ENCODE measurements at regions of chr19 and their contacts with region 1.

Region 1: GRCh38 chr19:55599468-55600279 is at the start of gene FIZ1:
- DNase-seq: peak; percentile 99
- H3K4me3 Mint-ChIP-seq: peak within 1 kb of the TSS; percentile 88
- H3K27ac Mint-ChIP-seq: peak within 1 kb of the TSS; percentile 98
- H3K4me1 Mint-ChIP-seq: peaks cover 33% of the 10 kb centered on the region
- H3K27me3 Mint-ChIP-seq: no peaks in the 10 kb centered on the region
- total RNA-seq, gene FIZ1: 20.4 and 21.4 TPM in 2 replicates

Region 2: DNA sequence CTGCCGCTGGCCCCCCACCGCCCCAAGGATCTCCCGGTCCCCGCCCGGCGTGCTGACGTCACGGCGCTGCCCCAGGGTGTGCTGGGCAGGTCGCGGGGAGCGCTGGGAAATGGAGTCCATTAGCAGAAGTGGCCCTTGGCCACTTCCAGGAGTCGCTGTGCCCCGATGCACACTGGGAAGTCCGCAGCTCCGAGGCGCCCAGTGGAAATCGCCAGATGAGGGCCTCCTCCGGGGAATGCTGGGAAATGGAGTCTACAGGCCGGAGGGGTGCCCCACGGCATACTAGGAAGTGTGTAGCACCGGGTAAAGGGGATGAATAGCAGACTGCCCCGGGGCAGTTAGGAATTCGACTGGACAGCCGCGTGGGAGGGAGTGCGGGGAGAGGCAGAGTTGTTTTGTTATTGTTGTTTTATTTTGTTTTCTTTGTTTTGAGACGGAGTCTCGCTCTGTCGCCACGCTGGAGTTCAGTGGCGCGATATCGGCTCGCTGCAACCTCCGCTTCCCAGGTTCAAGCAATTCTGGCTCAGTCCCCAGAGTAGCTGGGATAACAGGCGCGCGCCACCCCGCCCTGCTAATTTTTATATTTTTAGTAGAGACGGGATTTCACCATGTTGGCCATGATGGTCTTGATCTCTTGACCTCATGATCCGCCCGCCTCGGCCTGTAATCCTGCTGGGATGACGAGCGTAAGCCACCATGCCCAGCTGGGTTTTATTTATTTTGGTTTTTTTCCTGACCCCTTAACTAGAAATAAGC is 481.9 kb before region 1 on chr19 and contains the start of gene PPP1R12C:
- intact Hi-C with region 1: loop called (anchors 1 kb)
- DNase-seq: peak; percentile 99
- H3K4me3 Mint-ChIP-seq: peak within 1 kb of the TSS; percentile 94
- H3K27ac Mint-ChIP-seq: peak within 1 kb of the TSS; percentile 91
- H3K4me1 Mint-ChIP-seq: peaks cover 28% of the 10 kb centered on the region
- H3K27me3 Mint-ChIP-seq: peaks cover 10% of the 10 kb centered on the region
- total RNA-seq, gene PPP1R12C: 103 and 104 TPM in 2 replicates

Region 3: GRCh38 chr19:55476100-55476775 is 123.4 kb before region 1 on chr19 and contains the start of gene ZNF628:
- intact Hi-C with region 1: loop called (anchors 1 kb)
- DNase-seq: peak; percentile 99
- H3K4me3 Mint-ChIP-seq: peak within 1 kb of the TSS; percentile 93
- H3K27ac Mint-ChIP-seq: peak within 1 kb of the TSS; percentile 96
- H3K4me1 Mint-ChIP-seq: peaks cover 23% of the 10 kb centered on the region
- H3K27me3 Mint-ChIP-seq: no peaks in the 10 kb centered on the region
- total RNA-seq, gene ZNF628: 8.8 and 10.0 TPM in 2 replicates

Region 4: GRCh38 chr19:55552620-55553019 is 47.1 kb before region 1 on chr19:
- intact Hi-C with region 1: no loop called
- DNase-seq: no peak
- H3K4me3 Mint-ChIP-seq: no peak overlapping the region
- H3K27ac Mint-ChIP-seq: no peak overlapping the region
- H3K4me1 Mint-ChIP-seq: no peaks in the 10 kb centered on the region
- H3K27me3 Mint-ChIP-seq: peaks cover 5% of the 10 kb centered on the region

Region 5: DNA sequence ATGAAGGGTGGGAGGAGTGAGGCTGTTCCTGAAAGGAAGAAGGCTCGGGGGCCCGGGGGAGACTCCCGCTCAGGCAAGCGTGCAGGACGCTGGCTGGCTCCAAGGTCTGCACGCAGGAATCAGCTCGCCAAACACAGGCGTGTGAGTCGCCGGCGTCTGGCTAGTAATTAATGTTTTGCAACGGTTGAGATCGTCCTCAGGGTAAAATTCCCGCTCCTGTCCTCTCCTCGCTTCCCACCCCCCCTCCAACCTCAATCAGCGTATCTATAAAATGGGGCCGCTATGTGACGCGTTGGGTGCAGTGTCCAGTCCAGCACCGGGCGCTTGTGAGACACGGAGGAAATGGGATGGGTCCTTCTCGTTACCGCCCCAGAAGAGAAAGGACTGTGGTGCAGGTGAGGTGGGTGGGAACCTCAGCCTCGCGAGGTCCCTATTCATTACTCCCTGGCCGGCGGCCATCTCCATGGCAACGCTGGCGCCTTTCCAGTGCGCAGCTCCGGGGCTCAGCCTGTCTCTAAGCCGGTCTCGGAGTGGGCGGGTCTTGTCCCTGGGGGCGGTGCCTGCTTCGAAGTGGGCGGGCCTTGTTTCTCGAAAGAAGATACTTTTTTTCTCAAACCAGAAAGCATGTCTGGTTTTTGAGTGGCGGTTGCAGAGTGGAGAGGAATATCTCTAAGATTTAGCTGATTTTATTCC is 12.6 kb before region 1 on chr19:
- intact Hi-C with region 1: loop called (anchors 1 kb)
- DNase-seq: peak; percentile 98
- H3K4me3 Mint-ChIP-seq: peak overlapping the region; percentile 85
- H3K27ac Mint-ChIP-seq: no peak overlapping the region
- H3K4me1 Mint-ChIP-seq: peaks cover 14% of the 10 kb centered on the region
- H3K27me3 Mint-ChIP-seq: peaks cover 26% of the 10 kb centered on the region

Region 6: GRCh38 chr19:55643348-55644176 is 43.9 kb after region 1 on chr19 and contains the start of gene ZNF581:
- intact Hi-C with region 1: loop called (anchors 1 kb)
- DNase-seq: peak; percentile 95
- H3K4me3 Mint-ChIP-seq: peak within 1 kb of the TSS; percentile 90
- H3K27ac Mint-ChIP-seq: peak within 1 kb of the TSS; percentile 98
- H3K4me1 Mint-ChIP-seq: peaks cover 27% of the 10 kb centered on the region
- H3K27me3 Mint-ChIP-seq: no peaks in the 10 kb centered on the region
- total RNA-seq, gene ZNF581: 32.7 and 33.0 TPM in 2 replicates

Region 7: GRCh38 chr19:55809381-55810058 is 209.8 kb after region 1 on chr19:
- intact Hi-C with region 1: no loop called
- DNase-seq: peak; percentile 60
- H3K4me3 Mint-ChIP-seq: no peak overlapping the region
- H3K27ac Mint-ChIP-seq: no peak overlapping the region
- H3K4me1 Mint-ChIP-seq: no peaks in the 10 kb centered on the region
- H3K27me3 Mint-ChIP-seq: no peaks in the 10 kb centered on the region

Measured in activated CD4-positive, alpha-beta T cell treated with anti-CD3 and anti-CD28 coated beads, Interleukin-2, amount 10 ng/mL, durations not matched to agents 24 days and 14 days (primary cell).